Posterior vena cava (tissue), 2 donors: ENCODE measurements at regions of chr9 and their contacts with region 1.

Region 1: DNA sequence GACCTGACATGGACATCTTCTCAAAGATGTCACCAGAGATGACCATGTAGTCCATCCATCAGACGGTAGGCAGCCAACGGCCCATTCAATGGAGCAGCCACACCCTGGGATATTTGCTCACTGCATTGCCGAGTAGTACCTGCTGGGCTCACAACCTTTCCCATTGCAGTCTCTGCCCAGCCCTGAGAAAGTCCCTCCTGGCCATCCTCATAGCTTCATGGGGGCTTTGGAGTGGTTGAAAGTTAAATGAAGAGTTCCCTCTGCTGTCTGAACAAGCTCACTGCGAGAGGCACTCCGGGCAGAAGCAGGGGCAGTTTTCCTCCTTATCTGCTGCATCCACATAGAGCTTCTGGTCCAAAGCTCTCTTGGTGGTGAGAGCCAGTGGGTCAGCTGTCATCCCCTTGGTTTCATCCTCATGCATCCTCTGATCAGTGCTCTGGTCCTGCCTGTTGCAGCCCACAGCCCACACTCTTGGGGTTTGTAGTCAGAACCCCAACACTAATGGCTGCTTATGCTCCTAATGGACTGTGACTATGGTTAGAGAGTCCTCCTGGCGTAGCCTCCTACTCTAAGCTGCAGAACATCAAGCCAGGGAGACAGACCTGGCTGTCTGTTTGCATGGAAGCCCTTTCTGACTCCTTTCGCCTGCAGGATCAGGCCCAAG is 23.4 kb downstream of the TNFSF8 start:
- DNase-seq: no peak

Region 2: GRCh38 chr9:114662081-114662989 is 244.7 kb before region 1 on chr9:
- intact Hi-C with region 1: loop called in 1 of 2 experiments (anchors 10 kb)
- DNase-seq: no peak

Region 3: GRCh38 chr9:114681594-114682332 is 225.3 kb before region 1 on chr9 and contains the start of gene TEX48:
- intact Hi-C with region 1: loop called in 1 of 2 experiments (anchors 10 kb)
- DNase-seq: peak; percentile 84
- total RNA-seq, gene TEX48: not detected

Region 4: GRCh38 chr9:114738581-114739316 is 168.3 kb before region 1 on chr9:
- intact Hi-C with region 1: loop called (anchors 5 kb)
- DNase-seq: no peak

Region 5: DNA sequence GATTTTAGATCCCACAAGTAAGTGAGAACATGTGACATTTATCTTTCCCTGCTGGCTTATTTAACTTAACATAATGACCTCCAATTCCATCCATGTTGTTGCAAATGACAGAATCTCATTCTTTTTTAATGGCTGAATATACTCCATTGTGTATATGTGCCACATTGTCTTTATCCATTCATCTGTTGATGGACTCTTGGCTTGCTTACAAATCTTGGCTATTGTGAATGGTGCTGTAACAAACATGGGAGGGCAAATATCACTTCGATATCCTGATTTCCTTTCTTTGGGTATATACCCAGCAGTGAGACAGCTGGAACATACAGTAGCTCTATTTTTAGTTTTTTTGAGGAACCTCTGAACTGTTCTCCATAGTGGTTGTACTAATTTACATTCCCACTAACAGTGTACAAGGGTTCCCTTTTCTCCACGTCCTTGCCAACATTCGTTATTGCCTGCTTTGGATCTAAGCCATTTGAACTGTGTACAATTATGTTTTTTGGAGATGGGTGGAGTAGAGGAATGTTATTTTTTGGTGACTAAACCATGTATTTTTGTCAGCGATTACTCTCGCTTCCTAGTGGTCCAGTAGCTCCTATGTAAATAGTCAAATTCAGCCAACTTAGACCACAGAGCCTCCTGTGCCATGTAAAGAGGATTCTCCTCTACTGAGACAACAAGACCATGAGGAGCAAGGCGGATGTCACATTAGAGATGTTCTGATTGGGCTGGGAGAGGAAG is 161.8 kb before region 1 on chr9:
- intact Hi-C with region 1: loop called in 1 of 2 experiments (anchors 5 kb)
- DNase-seq: no peak

Region 6: GRCh38 chr9:115013998-115014397 is 107.0 kb after region 1 on chr9:
- intact Hi-C with region 1: loop called in 1 of 2 experiments (anchors 10 kb)
- DNase-seq: peak; percentile 87

Region 7: DNA sequence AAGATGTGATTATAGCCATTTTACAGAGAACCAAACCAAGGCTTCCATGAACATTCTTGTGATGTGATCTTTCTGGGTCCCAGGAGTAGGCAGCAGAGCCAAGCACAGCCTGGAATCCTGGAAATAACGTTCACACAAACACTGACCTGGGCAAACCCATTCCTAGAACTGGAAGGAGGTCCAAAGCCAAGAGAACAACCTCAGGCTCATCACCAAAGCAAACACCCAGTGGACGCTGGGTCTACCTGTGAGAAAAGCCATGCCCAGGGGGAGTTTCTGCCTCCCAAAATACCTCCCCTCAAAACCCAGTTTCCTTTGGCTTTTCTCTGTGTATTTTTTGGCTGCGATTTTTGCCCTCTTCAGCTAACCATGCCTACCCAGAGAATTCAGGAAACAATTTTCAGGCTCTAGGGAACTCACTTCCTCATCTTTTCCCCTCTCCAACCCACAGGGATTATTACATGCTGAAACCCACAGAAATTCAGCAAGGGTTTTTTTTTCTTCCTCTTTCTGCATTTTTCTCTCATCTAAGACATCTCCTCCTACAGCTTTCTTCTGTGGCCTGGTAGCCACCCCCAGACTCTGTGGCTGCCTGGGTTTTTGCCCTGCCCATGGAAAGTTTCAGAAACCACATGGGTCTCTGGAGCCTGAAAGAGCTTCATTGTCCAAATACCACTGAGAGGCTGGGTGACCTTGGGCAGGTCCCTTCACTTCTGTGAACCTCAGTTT is 135.9 kb after region 1 on chr9:
- intact Hi-C with region 1: no loop called
- DNase-seq: no peak